ENCODE measurements at regions of chr16 and their contacts with region 1.

Region 1: DNA sequence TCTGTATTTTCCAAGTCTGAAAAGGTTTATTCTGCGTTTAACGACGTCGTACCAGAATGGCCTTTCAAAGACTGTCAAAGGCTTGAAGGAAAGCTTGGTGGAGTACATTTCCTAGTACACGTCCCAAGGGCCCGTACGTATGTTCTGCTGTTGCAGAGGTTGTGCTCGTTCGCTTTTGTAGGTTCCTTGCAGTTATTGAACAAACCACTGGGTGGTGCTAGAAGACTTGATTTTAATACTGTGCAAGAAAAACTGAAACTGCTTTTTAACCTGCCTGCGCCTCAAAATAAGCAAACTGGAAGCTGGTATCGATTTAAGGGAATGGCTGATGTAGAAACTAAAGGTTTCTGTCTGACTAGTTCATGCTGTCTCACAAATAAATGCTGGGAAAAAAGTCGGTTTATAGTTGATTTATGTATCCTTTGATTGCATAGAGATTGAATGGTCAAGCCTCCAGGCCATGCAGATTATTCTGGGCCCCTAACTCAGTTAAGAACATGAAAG is 54.6 kb downstream of the USP10 start:
- DNase-seq: peak; percentile 33 to 76
- H3K4me3 ChIP-seq: no peak overlapping the region
- H3K27ac ChIP-seq: no peak overlapping the region
- H3K4me1 ChIP-seq: no peaks in the 10 kb centered on the region
- H3K27me3 ChIP-seq: no peaks in the 10 kb centered on the region
- CTCF ChIP-seq: peak in 2 of 3 experiments; percentile 73 to 79; a peak in 3 of 4 replicates
- EP300 ChIP-seq: no peak
- POLR2A ChIP-seq: no peak
- RAD21 ChIP-seq: peak; percentile 79 to 82

Region 2: GRCh38 chr16:84765616-84766580 is 11.5 kb after region 1 on chr16:
- CTCF ChIA-PET with region 1: interaction called, 27 read pairs
- POLR2A ChIA-PET with region 1: interaction called, 4 read pairs
- DNase-seq: no peak
- H3K4me3 ChIP-seq: no peak overlapping the region
- H3K27ac ChIP-seq: peak overlapping the region; percentile 20; the same call in 1 of the 2 replicates
- H3K4me1 ChIP-seq: no peaks in the 10 kb centered on the region
- H3K27me3 ChIP-seq: no peaks in the 10 kb centered on the region
- CTCF ChIP-seq: no peak
- EP300 ChIP-seq: no peak
- POLR2A ChIP-seq: no peak; a peak in 1 of 3 replicates
- RAD21 ChIP-seq: no peak

Region 3: DNA sequence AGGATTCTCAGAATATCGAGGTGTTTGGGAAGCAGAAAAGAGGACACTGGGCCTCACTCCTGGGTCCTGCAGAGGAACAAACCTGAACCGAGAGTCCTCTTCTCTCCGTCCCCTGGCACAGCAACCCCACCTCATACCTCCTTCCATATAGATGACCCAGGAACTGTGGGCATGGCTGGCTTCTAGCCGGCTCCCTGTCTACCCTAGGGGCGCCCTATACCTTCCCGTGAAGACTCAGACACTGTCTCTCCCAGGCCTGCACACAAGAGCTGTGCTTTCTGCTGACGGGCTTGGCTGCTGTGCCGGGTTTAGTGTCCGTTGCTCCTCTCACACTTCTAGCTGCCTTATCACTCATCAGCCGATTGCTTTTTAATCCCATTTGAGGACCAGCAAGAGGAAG is 18.9 kb after region 1 on chr16:
- CTCF ChIA-PET with region 1: interaction called, 24 read pairs
- POLR2A ChIA-PET with region 1: no interaction called
- DNase-seq: no peak
- H3K4me3 ChIP-seq: no peak overlapping the region
- H3K27ac ChIP-seq: no peak overlapping the region
- H3K4me1 ChIP-seq: no peaks in the 10 kb centered on the region
- H3K27me3 ChIP-seq: no peaks in the 10 kb centered on the region
- CTCF ChIP-seq: peak in 1 of 3 experiments; percentile 11; a peak in 1 of 4 replicates
- EP300 ChIP-seq: no peak
- POLR2A ChIP-seq: no peak
- RAD21 ChIP-seq: peak in 1 of 2 experiments; percentile 36; a peak in 2 of 4 replicates

Region 4: GRCh38 chr16:84959045-84959576 is 204.7 kb after region 1 on chr16:
- CTCF ChIA-PET with region 1: interaction called, 75 read pairs
- POLR2A ChIA-PET with region 1: no interaction called
- DNase-seq: no peak
- H3K4me3 ChIP-seq: no peak overlapping the region
- H3K27ac ChIP-seq: no peak overlapping the region
- H3K4me1 ChIP-seq: 0 out of 7 replicates have a peak, but pooled peaks cover 0 to 2% (median 0%) of the 10 kb centered on the region in 4 experiments
- H3K27me3 ChIP-seq: no peaks in the 10 kb centered on the region
- CTCF ChIP-seq: peak; percentile 54 to 95 (median 65)
- EP300 ChIP-seq: no peak
- POLR2A ChIP-seq: no peak
- RAD21 ChIP-seq: peak in 1 of 2 experiments; percentile 28; a peak in 1 of 4 replicates